ENCODE measurements at regions of chr1 and their contacts with region 1.

Region 1: GRCh38 chr1:18913065-18913835 is 10.9 kb upstream of the ALDH4A1 start:
- H3K4me3 ChIP-seq: no peak overlapping the region
- H3K27ac ChIP-seq: no peak overlapping the region
- H3K4me1 ChIP-seq: no peaks in the 10 kb centered on the region; the same call in none of the 2 replicates
- CTCF ChIP-seq: peak; percentile 87

Region 2: DNA sequence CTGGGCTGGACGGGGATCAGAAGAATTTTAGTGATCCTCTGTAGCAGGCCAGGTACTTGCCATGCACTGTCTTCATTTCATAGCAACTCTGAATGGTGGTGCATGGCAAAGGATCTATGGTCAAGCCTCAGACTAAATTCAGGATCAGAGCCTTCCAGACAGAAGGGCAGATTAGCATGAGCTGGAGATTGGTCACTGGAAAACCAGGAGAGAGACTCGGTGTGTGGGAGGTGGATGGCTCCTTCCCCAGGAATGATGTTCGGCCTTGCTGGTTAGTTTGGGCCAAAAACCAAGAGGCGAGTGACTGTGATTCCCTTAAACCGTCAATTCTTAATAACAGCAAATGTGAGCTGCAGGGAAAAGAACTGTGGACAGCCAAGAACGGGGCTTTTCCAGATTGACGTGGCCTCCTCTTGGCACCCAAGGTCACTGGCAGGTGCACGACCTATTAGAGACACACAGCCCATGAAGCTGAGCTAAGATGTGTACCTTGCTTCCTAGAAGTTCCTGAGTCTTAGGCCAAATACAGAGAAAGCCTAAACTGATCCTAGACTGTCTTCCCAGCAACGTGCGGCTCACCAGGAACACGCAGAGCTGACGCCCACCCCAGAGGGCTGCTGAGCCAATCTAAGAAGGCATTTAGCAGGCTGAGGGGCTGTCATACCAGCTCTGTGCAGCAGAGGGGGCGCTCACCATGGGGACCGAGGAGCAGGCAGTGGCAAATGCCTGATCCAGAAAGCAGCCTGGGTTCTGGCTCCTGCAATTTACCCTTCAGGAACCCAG is 29.4 kb before region 1 on chr1:
- CTCF ChIA-PET with region 1: interaction called, 15 read pairs
- POLR2A ChIA-PET with region 1: no interaction called
- H3K4me3 ChIP-seq: no peak overlapping the region
- H3K27ac ChIP-seq: no peak overlapping the region
- H3K4me1 ChIP-seq: 0 out of 2 replicates have a peak, but pooled peaks cover 2% of the 10 kb centered on the region
- CTCF ChIP-seq: peak; percentile 76

Region 3: DNA sequence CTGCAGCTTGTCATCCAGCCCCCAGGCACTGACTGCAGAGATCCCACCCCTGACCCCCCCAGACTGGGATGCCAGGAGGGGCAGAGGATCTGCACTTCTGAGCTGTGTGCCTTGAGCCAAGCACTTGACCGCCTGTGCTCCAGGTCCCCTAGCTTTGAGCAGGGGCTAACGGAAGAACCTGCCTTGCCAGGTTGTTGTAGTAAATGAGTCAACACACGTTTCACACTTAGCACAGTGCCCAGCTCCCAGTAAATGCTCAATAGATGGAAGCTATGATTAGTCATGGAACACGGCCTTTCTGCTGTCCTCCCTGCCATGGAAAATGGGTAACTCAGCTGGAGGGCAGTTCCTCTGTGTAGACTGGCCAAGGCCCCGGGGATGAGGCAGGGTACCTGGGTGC is 19.1 kb after region 1 on chr1:
- CTCF ChIA-PET with region 1: interaction called, 68 read pairs
- POLR2A ChIA-PET with region 1: no interaction called
- H3K4me3 ChIP-seq: no peak overlapping the region
- H3K27ac ChIP-seq: no peak overlapping the region
- H3K4me1 ChIP-seq: no peaks in the 10 kb centered on the region
- CTCF ChIP-seq: no peak

Region 4: DNA sequence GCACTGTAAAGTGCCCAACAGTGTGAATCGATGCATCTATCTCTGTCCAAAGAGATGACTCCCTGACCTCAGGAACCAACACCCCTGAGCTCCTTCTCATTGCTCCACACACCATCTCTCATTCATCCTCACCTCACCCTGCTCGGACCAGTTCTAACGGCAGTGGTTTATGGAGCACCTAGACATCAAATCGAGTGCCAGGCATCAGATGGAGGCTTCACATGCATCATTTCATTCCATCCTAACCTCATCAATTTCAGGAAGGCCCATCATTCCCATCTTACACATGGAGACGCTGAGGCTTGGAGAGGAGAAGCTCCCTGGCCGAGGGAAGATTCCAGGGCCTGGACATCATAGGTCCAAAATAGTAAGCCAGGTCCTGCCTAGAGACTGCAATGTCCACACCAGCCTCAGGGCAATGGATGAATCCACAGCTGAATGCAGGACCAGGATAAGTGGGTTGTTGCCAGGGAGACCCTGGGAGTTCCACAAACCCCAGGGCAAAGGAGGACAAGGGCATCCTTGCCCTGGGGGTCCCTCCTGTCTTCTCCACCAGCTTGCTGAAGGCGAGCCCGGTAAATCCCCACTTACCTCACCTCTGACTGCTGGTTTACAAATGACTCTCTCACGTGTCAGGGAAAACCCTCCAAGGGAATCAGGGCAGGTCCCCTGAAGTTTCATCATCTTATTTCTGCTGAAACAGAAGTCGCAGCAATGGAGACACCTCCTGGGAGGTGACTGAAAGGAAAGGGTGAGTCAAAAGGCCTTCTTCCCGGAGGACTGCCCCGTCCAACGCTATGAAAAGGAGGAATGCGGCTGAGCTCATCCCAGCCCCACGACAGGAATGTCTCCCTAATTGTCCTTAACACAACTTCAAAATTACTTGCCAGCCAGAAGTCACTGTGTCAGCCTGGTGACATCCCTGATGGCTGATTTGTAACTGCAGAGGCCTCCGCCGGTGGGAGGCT is 52.2 kb after region 1 on chr1:
- CTCF ChIA-PET with region 1: interaction called, 56 read pairs
- POLR2A ChIA-PET with region 1: no interaction called
- H3K4me3 ChIP-seq: no peak overlapping the region
- H3K27ac ChIP-seq: no peak overlapping the region
- H3K4me1 ChIP-seq: no peaks in the 10 kb centered on the region
- CTCF ChIP-seq: no peak

Region 5: GRCh38 chr1:19010995-19011844 is 98.0 kb after region 1 on chr1:
- CTCF ChIA-PET with region 1: interaction called, 48 read pairs
- POLR2A ChIA-PET with region 1: interaction called, 3 read pairs
- H3K4me3 ChIP-seq: no peak overlapping the region
- H3K27ac ChIP-seq: no peak overlapping the region
- H3K4me1 ChIP-seq: peaks cover 2% of the 10 kb centered on the region; the same call in 1 of the 2 replicates
- CTCF ChIP-seq: no peak

Region 6: DNA sequence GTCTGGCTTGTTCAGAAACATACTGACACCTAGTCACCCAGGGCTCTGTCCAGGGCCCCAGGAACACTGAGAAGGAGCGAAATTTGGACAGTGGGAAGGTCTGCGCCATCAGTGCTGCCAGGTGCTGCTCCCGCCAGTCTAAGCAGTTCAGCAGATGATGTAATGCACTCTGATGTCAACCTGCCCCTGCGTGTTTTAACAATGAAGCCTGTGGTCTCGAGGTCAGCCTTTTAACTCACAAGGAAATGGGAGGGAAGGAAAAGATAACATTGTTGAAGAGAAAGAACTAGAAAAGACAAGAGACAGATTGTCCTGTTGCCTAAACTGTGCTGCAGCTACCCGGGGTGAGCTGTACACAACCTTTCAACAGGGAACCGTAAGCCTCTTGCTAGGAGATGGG is 169.8 kb after region 1 on chr1:
- CTCF ChIA-PET with region 1: interaction called, 17 read pairs
- POLR2A ChIA-PET with region 1: no interaction called
- H3K4me3 ChIP-seq: no peak overlapping the region
- H3K27ac ChIP-seq: no peak overlapping the region
- H3K4me1 ChIP-seq: no peaks in the 10 kb centered on the region
- CTCF ChIP-seq: no peak

Measured in HEK293 (cell line).